ENCODE measurements at regions of chr16 and their contacts with region 1.

Region 1: DNA sequence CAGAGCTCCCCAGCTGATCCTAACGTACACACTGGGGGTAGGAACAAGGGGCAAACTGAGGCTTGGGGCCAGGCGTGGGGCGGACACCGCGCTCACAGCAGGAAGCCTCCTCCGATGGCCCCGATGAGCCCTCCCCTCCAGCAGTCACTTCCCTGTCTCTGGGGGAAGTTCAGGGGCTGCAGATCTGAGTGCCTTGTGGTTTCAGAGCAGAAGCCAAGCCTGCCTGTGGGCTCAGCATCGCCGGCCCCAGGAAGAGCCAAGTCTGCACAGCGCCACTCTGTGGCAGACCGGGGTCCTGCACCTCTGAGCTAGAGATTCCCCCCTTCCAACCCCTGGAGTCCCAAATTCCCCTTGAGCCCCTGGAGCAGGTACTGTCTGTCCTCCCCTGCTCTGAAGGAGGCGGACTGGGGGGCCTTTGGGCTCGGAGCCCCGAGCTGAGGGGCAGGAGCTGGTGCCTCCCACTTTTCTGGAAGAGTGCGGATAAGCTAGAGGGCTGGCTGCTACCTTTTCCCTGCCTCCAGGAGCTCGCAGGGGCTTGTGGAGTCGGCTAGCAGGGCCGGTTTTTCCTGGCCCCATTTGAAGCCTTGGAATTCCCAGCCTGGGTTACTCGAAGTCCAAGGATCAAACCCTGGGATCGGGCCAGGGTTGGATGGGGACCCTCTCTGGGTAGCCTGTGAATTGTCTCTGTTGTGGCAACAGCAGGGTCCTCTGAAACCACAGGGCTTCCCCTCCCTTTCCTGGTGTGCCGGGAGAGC is 2.9 kb downstream of the GSE1 start:
- DNase-seq: peak; percentile 57
- H3K4me3 Mint-ChIP-seq: peak overlapping the region; percentile 76
- H3K27ac Mint-ChIP-seq: no peak overlapping the region
- H3K4me1 Mint-ChIP-seq: peaks cover 4% of the 10 kb centered on the region
- H3K27me3 Mint-ChIP-seq: no peaks in the 10 kb centered on the region
- CTCF ChIP-seq: peak; percentile 76

Region 2: DNA sequence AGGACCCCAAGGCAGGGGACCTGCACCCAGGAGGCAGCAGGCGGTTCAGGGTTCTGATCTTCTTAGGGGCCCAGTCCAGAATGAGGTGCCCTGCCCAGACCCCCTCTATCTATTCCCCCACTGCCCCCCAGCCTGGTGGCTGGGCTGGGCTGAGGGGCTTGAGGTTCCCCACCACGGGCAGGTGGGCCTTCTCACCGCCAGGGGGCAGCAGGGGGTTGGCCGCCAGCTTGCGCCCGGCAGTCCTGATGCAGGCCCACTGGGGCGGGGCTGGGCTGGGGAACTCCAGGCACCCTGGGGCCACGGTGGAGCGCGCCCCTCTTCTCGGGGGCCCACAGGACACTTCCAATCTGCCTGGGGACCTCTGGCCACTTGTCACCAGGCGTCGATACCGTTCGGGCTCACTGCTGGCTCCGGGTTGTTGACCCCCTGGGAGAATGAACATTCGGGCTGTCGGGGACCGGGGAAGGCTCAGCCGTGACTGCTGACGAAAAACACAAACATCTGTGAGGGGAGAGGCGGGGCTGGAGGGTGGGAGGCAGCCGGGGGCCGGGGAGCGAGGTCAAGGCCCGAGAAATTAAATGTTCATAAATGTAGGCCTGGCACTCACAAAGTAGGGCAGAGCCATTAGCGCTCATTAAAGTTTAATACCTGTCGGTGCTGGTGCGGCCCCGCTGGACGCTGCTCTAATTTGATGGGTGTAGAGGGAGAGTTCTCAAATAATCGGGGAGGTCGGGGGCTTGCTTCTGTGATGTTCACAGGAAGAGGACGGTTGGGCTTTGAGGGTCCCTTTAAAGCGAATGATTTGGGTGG is 222.2 kb before region 1 on chr16:
- CTCF ChIA-PET with region 1: interaction called, 9 read pairs
- POLR2A ChIA-PET with region 1: interaction called, 13 read pairs
- intact Hi-C with region 1: no loop called
- DNase-seq: no peak
- H3K4me3 Mint-ChIP-seq: no peak overlapping the region
- H3K27ac Mint-ChIP-seq: no peak overlapping the region
- H3K4me1 Mint-ChIP-seq: peaks cover 47% of the 10 kb centered on the region
- H3K27me3 Mint-ChIP-seq: no peaks in the 10 kb centered on the region
- CTCF ChIP-seq: peak; percentile 44

Region 3: DNA sequence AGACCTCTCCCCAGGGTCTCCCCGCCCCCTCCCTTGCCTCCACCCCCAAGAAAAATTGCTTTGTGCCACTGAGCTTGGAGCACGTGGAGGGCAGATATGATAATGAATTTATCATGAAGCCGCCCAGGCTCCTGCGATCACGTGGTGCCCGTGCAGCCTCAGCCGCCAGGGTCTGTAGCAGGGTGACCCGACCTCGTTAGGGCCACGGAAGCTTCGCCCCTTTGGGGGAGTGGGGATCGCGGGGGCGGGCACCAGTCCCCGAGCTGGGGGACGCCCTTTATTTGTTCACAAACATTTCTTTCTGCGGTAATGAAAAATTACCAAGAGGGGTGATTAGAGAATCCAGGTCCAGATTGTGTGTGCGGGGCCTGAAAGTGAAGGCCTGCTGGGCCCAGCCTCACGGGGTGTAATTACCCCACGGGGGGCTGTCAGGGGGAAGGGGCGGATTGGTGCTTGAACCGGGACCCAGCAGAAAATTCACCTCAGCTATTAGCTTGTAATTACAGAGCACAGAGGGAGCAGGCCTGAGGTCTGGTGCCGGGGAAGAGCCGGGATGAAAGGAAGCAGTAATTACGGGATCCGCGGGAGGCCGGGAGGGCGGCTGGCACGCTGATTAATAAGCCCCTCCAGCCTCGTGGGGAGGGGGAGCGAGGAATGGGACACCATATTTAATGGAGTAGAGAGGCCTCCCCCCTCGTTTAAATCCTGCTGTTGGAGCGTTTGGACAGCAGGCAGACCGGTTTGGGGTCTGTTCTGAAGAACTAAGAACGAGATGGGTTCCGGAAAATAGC is 10.4 kb after region 1 on chr16:
- CTCF ChIA-PET with region 1: interaction called, 11 read pairs
- POLR2A ChIA-PET with region 1: interaction called, 3 read pairs
- intact Hi-C with region 1: no loop called
- DNase-seq: no peak
- H3K4me3 Mint-ChIP-seq: no peak overlapping the region
- H3K27ac Mint-ChIP-seq: no peak overlapping the region
- H3K4me1 Mint-ChIP-seq: no peaks in the 10 kb centered on the region
- H3K27me3 Mint-ChIP-seq: no peaks in the 10 kb centered on the region
- CTCF ChIP-seq: no peak